Breast epithelium (tissue), 4 donors: ENCODE measurements at regions of chr14 and their contacts with region 1.

Region 1: DNA sequence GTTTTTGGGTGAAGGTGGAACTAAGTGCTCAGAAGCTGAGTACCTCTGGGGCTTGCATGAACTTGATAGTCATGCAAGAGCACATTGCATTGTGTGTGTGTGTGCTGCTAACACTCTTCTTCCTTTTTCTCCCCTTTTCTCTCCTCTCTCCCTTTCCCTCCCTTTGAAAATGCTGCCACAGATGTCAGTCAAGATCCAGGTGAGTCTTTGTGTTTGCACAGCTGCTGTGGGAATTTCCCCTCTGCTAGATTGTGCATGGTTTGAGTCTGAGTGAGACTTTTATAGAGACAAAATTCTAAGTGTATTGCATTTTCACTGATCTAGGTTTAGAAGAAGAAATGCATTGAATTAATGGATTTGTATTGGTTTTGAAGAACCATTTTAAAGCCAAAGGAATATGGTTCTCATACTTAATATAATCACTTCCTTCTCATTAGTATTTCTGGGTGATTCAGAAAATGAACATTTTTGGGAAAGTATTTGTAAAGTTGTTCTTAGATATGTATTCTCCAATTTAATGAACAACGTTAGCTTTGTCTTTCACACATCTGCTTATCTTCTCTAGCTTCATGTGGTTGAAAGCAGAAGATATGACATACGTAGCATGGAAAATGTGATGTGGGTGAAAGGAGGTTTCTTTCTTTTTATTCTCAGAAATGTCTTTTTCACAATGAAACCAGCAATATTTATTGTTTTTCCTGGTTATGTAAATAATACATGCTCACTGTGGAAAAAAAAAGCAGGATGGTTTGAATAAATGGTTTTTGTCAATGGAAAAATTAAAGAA is 108.5 kb downstream of the NRXN3 start:
- DNase-seq: no peak
- H3K4me3 ChIP-seq: no peak overlapping the region
- H3K27ac ChIP-seq: no peak overlapping the region
- H3K4me1 ChIP-seq: no peaks in the 10 kb centered on the region
- H3K27me3 ChIP-seq: no peaks in the 10 kb centered on the region
- CTCF ChIP-seq: no peak
- POLR2A ChIP-seq: no peak

Region 2: GRCh38 chr14:76832503-76832988 is 1446.1 kb before region 1 on chr14:
- intact Hi-C with region 1: no loop called
- DNase-seq: no peak
- H3K4me3 ChIP-seq: no peak overlapping the region
- H3K27ac ChIP-seq: no peak overlapping the region
- H3K4me1 ChIP-seq: peaks cover 0 to 14% of the 10 kb centered on the region in 2 donors
- H3K27me3 ChIP-seq: no peaks in the 10 kb centered on the region
- CTCF ChIP-seq: no peak
- POLR2A ChIP-seq: no peak

Region 3: GRCh38 chr14:79009286-79009685 is 730.6 kb after region 1 on chr14:
- intact Hi-C with region 1: loop called (anchors 5 kb)
- DNase-seq: no peak
- H3K4me3 ChIP-seq: no peak overlapping the region
- H3K27ac ChIP-seq: no peak overlapping the region
- H3K4me1 ChIP-seq: no peaks in the 10 kb centered on the region
- H3K27me3 ChIP-seq: no peaks in the 10 kb centered on the region
- CTCF ChIP-seq: no peak
- POLR2A ChIP-seq: no peak